ENCODE measurements at regions of chr10 and their contacts with region 1.

Region 1: GRCh38 chr10:24503461-24504320 is 220.0 kb downstream of the ARHGAP21 start:
- DNase-seq: peak in 1 of 2 experiments; percentile 40
- H3K4me3 ChIP-seq: no peak overlapping the region
- H3K27ac ChIP-seq: no peak overlapping the region
- H3K4me1 ChIP-seq: no peaks in the 10 kb centered on the region
- H3K27me3 ChIP-seq: no peaks in the 10 kb centered on the region
- CTCF ChIP-seq: peak; percentile 74

Region 2: DNA sequence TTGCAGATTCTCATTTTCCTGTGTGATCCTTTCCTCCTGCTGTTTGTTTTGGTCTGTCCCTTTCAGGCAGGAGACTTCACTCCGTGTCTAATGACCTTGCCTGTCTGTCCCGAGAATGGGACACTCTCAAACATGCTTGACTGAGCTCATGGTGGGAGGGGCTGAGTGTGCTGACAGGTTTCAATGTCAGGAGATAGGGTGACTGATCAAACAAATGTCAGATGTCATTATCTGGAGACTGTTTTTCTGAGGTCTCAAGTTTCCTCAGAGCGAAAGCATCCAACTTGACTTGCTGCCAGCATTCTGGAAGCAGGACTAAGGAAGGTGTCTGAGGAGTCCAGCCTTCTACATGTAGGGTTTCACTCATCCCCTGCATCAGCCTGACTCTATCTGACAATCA is 523.6 kb before region 1 on chr10:
- CTCF ChIA-PET with region 1: no interaction called
- POLR2A ChIA-PET with region 1: no interaction called
- intact Hi-C with region 1: no loop called
- DNase-seq: no peak
- H3K4me3 ChIP-seq: no peak overlapping the region
- H3K27ac ChIP-seq: no peak overlapping the region
- H3K4me1 ChIP-seq: no peaks in the 10 kb centered on the region
- H3K27me3 ChIP-seq: no peaks in the 10 kb centered on the region; the same call in 1 of the 2 replicates
- CTCF ChIP-seq: no peak

Region 3: DNA sequence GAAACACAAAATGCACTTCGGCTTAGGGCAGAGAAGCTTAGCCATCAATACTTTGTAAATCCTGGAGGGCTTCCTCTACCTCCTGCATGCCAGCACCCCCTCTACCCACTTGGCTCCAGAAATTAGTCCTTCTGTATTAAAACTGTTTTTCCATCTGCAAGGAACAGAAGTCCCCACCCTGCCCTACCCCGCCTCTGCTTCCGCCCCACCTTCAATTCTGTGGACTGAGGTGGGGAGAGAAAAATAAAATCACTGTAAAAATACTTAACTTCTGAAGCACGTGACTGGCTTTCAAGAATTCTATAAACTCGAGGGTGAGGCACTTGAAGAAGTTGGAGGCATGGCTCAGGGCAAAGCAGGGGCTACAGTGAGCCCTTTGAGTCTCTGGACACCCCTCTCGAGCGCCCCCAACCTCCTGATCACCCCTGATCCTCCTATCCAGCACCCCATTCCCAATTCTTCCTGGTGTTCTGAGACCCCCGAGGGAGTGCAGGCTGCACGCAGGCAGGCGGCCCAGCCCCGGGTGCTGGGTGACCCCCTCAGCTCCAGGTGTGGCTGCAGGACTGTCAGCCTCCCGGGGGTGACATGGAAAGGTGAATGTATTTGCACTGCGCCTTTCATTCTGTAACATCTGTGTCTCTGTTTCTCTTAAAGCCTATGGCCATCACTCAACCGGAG is 302.0 kb before region 1 on chr10:
- CTCF ChIA-PET with region 1: no interaction called
- POLR2A ChIA-PET with region 1: no interaction called
- intact Hi-C with region 1: loop called (anchors 1 kb)
- DNase-seq: no peak
- H3K4me3 ChIP-seq: no peak overlapping the region
- H3K27ac ChIP-seq: no peak overlapping the region
- H3K4me1 ChIP-seq: peaks cover 8% of the 10 kb centered on the region
- H3K27me3 ChIP-seq: no peaks in the 10 kb centered on the region
- CTCF ChIP-seq: no peak

Region 4: GRCh38 chr10:24415455-24416125 is 88.1 kb before region 1 on chr10:
- CTCF ChIA-PET with region 1: no interaction called
- POLR2A ChIA-PET with region 1: no interaction called
- intact Hi-C with region 1: no loop called
- DNase-seq: peak in 1 of 2 experiments; percentile 49
- H3K4me3 ChIP-seq: no peak overlapping the region
- H3K27ac ChIP-seq: no peak overlapping the region
- H3K4me1 ChIP-seq: no peaks in the 10 kb centered on the region
- H3K27me3 ChIP-seq: no peaks in the 10 kb centered on the region
- CTCF ChIP-seq: no peak

Region 5: GRCh38 chr10:24589265-24589664 is 85.6 kb after region 1 on chr10:
- CTCF ChIA-PET with region 1: no interaction called
- POLR2A ChIA-PET with region 1: no interaction called
- intact Hi-C with region 1: no loop called
- DNase-seq: no peak
- H3K4me3 ChIP-seq: no peak overlapping the region
- H3K27ac ChIP-seq: no peak overlapping the region
- H3K4me1 ChIP-seq: no peaks in the 10 kb centered on the region
- H3K27me3 ChIP-seq: no peaks in the 10 kb centered on the region
- CTCF ChIP-seq: no peak